AG04450 (cell line): ENCODE measurements at regions of chr1 and their contacts with region 1.

Region 1: DNA sequence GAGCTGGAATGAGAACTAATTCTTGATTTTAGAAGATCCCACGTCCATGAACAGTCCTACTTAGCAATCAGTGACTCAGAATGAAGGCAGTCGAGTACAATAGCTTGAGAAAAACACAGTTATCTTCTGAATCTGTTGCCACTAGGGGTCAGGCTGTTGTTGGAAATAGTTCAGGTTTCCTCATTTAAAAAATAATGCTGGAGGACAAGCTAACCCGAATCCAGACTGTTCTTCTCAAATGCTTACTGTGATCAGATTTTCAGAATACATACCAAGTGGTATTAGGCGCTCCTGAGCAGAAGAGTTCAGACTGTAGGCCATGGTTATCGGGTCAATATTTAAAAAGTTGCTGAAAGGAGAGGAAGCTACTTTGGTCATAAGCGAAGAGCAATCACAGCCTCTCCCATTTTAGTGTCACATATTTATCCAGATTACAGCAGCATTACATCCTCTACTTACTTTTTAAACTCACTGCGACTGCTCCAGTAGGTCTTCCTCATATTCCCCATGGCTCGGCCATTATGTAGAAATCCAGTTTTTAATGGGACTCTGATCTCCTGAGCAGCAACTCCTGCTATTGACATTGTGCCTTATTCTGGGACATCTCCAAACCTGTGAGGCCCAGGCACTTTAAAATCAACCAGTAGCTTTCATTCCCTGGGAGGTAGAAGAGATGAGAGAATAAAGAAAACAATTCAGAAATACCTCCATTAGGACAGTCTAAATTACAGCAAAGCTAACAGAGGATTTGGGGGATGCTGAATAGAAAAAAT is 10.9 kb downstream of the ERRFI1 start:
- DNase-seq: no peak
- H3K4me3 ChIP-seq: no peak overlapping the region
- H3K27ac ChIP-seq: peak overlapping the region; percentile 42
- H3K27me3 ChIP-seq: no peaks in the 10 kb centered on the region
- CTCF ChIP-seq: peak; percentile 75

Region 2: GRCh38 chr1:7975212-7975865 is 39.9 kb before region 1 on chr1:
- CTCF ChIA-PET with region 1: interaction called, 35 read pairs
- POLR2A ChIA-PET with region 1: interaction called, 3 read pairs
- DNase-seq: peak; percentile 48
- H3K4me3 ChIP-seq: no peak overlapping the region
- H3K27ac ChIP-seq: no peak overlapping the region
- H3K27me3 ChIP-seq: no peaks in the 10 kb centered on the region
- CTCF ChIP-seq: peak; percentile 90

Region 3: DNA sequence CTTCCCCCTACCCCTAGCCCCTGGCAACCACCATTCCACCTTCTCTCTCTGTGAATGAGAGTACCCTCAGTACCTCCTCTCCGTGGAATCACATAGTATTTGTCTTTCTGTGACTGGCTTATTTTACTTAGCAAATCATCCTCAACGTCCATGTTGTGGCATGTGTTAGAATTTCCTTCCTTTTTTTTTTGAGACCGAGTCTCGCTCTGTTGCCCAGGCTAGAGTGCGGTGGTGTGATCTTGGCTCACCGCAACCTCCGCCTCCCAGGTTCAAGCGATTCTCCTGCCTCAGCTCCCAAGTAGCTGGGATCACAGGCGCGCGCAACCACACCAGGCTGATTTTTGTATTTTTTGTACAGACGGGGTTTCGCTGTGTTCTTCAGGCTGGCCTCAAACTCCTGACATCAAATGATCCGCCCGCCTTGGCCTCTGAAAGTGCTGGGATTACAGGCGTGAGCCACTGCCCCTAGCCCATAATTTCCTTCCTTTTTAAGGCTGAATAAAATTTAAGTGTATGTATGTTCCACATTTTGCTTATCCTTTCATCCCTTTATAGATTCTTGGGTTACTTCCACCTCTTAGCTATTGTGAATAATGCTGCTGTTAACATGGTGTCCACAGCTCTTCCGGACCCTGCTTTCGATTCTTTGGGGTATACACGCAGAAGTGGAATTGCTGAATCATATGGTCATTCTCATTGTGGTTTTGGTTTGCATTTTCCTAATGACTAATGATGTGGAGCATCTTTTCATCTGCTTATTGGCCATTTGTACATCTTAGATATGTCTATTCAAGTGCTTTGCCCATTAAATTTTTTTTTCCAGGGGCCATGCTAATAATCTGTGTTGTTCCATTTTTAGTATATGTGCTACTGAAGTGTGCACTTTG is 21.4 kb before region 1 on chr1:
- CTCF ChIA-PET with region 1: interaction called, 11 read pairs
- POLR2A ChIA-PET with region 1: interaction called, 3 read pairs
- DNase-seq: peak; percentile 71
- H3K4me3 ChIP-seq: no peak overlapping the region
- H3K27ac ChIP-seq: peak overlapping the region; percentile 84
- H3K27me3 ChIP-seq: no peaks in the 10 kb centered on the region
- CTCF ChIP-seq: no peak

Region 4: GRCh38 chr1:8230292-8230621 is 215.0 kb after region 1 on chr1:
- CTCF ChIA-PET with region 1: no interaction called
- POLR2A ChIA-PET with region 1: interaction called, 11 read pairs
- DNase-seq: no peak
- H3K4me3 ChIP-seq: no peak overlapping the region
- H3K27ac ChIP-seq: no peak overlapping the region
- H3K27me3 ChIP-seq: no peaks in the 10 kb centered on the region
- CTCF ChIP-seq: no peak

Region 5: GRCh38 chr1:8314346-8315280 is 299.4 kb after region 1 on chr1:
- CTCF ChIA-PET with region 1: interaction called, 83 read pairs
- POLR2A ChIA-PET with region 1: interaction called, 6 read pairs
- DNase-seq: peak; percentile 52
- H3K4me3 ChIP-seq: no peak overlapping the region
- H3K27ac ChIP-seq: no peak overlapping the region
- H3K27me3 ChIP-seq: no peaks in the 10 kb centered on the region
- CTCF ChIP-seq: peak; percentile 96

Region 6: GRCh38 chr1:8348777-8349491 is 333.7 kb after region 1 on chr1:
- CTCF ChIA-PET with region 1: interaction called, 68 read pairs
- POLR2A ChIA-PET with region 1: interaction called, 3 read pairs
- DNase-seq: peak; percentile 23
- H3K4me3 ChIP-seq: no peak overlapping the region
- H3K27ac ChIP-seq: no peak overlapping the region
- H3K27me3 ChIP-seq: no peaks in the 10 kb centered on the region
- CTCF ChIP-seq: peak; percentile 82